ENCODE measurements at regions of chr22 and their contacts with region 1.

Region 1: DNA sequence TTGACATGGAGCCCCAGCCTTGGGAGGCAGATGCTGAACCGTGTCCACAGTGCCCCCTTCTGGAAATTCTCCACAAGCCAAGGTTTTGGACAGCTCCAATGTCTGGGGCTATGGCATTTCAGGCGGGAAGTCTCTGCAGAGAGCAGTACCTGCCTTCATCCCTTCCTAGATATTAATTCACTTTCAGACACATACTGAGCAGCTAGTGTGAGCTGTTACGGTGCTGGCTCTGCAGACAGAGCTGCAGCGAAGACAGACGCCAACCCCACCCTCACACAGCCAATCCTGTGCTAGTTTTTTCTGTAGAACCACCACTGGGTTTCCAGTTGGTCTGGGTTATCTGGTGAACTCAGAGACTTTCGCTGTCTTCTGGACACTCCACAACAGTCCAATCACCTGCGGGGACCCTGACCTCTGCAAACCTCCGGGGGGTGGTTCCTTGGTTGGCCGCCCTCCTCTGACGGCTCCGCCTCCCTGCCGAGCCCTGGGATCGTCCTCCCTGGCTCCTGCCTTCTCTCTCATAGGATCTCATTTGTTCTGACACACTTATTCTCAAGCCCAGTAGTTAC is 9.1 kb downstream of the LMF2 start:
- DNase-seq: peak; percentile 86 to 88
- H3K4me3 ChIP-seq: peak overlapping the region; percentile 1; the same call in 1 of the 2 replicates
- H3K4me3 Mint-ChIP-seq: peak overlapping the region; percentile 53
- H3K27ac Mint-ChIP-seq: peak overlapping the region; percentile 63
- H3K4me1 ChIP-seq: peaks cover 6% of the 10 kb centered on the region; the same call in 1 of the 2 replicates
- H3K4me1 Mint-ChIP-seq: peaks cover 7% of the 10 kb centered on the region
- H3K27me3 ChIP-seq: no peaks in the 10 kb centered on the region
- H3K27me3 Mint-ChIP-seq: no peaks in the 10 kb centered on the region
- CTCF ChIP-seq: peak; percentile 40 to 62

Region 2: DNA sequence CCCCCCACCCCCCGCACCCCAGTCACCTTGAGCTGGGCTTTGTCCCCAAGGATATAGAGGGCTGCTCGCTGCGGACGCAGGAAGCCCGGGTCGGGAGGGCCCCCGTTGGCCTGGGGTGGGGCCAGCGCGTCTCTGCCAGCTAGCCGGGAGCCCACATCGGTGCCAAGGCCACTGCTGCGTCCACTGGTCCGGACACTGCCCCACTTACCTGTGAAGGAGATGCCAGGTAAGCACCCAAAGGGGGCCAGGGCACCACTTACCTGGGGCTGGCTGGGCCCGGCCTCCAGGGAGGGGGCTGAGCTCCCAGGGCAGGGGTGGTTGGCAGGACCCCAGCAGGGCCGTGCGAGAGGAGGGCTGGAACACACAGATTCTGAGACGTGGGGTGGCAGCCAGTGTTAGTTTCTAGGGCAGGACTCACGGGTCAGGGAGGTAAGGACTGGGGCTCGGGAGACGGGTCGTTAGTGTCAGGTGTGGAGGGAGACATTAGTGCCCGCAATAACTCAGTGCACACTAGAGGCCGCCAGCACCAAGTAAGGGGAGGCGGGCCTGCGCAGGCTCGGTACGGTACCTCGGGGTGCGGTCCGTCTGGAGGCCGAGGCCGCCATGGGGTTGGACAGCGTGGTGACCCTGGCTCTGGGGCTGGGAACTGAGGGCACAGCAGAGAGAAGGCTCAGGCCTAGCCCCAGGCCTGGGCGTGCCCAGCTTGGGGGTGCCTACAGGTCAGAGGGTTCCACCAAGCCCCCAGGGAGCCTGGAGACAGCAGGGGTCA is 41.8 kb before region 1 on chr22:
- CTCF ChIA-PET with region 1: interaction called, 9 read pairs
- POLR2A ChIA-PET with region 1: no interaction called
- intact Hi-C with region 1: loop called (anchors 1 kb)
- DNase-seq: peak in 1 of 2 experiments; percentile 46
- H3K4me3 ChIP-seq: no peak overlapping the region
- H3K4me3 Mint-ChIP-seq: no peak overlapping the region
- H3K27ac Mint-ChIP-seq: no peak overlapping the region
- H3K4me1 ChIP-seq: peaks cover 6% of the 10 kb centered on the region; the same call in 1 of the 2 replicates
- H3K4me1 Mint-ChIP-seq: peaks cover 5% of the 10 kb centered on the region
- H3K27me3 ChIP-seq: no peaks in the 10 kb centered on the region
- H3K27me3 Mint-ChIP-seq: no peaks in the 10 kb centered on the region
- CTCF ChIP-seq: peak; percentile 37 to 49

Region 3: GRCh38 chr22:50485201-50486131 is 12.9 kb before region 1 on chr22:
- CTCF ChIA-PET with region 1: interaction called, 4 read pairs
- POLR2A ChIA-PET with region 1: no interaction called
- intact Hi-C with region 1: loop called (anchors 2 kb)
- DNase-seq: no peak
- H3K4me3 ChIP-seq: no peak overlapping the region
- H3K4me3 Mint-ChIP-seq: no peak overlapping the region
- H3K27ac Mint-ChIP-seq: peak overlapping the region; percentile 66
- H3K4me1 ChIP-seq: peaks cover 15% of the 10 kb centered on the region
- H3K4me1 Mint-ChIP-seq: peaks cover 14% of the 10 kb centered on the region
- H3K27me3 ChIP-seq: no peaks in the 10 kb centered on the region
- H3K27me3 Mint-ChIP-seq: no peaks in the 10 kb centered on the region
- CTCF ChIP-seq: no peak

Measured in Caco-2 (cell line).